Vagina (tissue), 2 donors: ENCODE measurements at regions of chr17 and their contacts with region 1.

Region 1: DNA sequence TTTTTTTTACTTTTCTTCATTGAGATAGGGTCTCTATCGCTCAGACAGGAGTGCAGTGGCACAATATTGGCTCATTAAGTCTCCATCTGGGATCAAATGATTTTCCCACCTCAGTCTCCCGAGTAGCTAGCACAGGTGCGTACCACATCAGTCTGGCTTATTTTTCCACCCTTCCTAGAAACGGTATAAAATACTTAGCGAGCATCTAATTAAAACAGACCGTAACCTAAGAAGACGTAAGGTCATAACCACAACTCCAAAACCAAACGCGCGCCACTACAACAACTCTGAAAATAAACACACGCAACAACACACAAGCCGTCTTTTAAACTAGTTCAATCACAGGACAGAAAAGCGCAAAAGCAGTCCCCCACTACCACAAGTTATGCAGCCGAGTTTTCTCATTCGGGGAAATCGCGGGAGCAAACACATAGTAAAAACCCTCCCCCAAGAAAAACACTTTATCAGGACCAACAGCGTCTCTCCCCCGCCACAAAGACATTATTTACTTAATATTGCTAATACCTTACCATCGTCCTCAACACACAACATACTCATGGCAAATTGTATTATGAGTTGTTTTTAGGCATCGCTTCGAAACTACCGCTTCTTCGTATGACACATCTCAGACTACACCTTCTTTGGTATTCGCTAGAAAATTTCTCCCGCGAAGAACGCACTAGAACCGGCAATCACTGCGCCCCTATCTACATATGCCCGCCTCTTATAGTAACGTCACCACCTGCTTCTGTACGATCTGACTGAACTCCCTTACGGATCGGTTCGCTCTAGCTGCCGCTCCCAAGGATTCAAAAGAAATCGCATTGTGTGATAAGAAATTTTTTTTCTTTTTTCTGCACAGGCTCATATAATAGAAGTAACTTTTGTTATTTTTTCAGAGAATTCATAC is 32.8 kb downstream of the TEX14 start:
- DNase-seq: peak in 1 of 2 donors; percentile 92
- H3K4me3 ChIP-seq: peak overlapping the region; percentile 29 to 44
- H3K27ac ChIP-seq: peak overlapping the region; percentile 59
- H3K4me1 ChIP-seq: peaks cover 5% of the 10 kb centered on the region
- H3K27me3 ChIP-seq: no peaks in the 10 kb centered on the region
- CTCF ChIP-seq: no peak
- POLR2A ChIP-seq: peak; percentile 92

Region 2: DNA sequence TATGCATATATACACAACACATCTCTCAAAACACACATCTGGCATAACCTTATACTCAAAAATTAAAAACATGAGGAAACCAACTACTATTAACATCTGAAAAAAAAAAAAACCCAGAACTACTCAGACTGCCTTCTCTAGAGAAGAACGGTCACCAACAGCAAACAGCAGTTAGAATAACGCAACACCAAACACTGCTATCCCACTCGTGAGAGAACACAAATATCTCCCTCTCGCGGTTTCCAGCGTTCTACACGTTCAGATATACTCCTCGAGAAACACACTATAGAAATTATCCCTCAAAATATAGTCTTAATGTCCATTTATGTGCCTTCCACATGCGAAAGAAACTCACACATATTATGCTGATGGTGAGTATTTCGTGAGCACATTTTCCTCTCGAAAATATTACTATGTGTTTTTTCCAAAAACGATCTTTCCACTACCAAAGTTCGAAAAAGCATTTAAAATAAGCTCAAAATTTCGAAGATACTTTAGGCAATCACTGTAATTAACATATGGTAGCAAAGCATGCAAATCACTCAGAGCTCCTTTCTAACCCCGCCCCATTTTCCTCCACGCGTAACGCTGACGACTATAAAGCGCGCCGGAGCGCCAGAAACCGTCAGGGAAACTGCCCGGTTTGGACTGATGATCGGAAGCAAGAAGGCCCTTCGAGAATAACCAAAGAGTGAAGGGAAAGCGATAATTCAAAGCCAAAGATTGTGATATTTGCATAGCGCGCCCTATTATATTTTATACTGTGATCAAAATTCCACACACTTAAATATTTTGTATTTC is 27.3 kb before region 1 on chr17:
- intact Hi-C with region 1: loop called (anchors 2 kb)
- DNase-seq: peak in 1 of 2 donors; percentile 95
- H3K4me3 ChIP-seq: peak overlapping the region; percentile 40 to 45
- H3K27ac ChIP-seq: peak overlapping the region; percentile 78
- H3K4me1 ChIP-seq: peaks cover 5% of the 10 kb centered on the region
- H3K27me3 ChIP-seq: no peaks in the 10 kb centered on the region
- CTCF ChIP-seq: no peak
- POLR2A ChIP-seq: peak in 1 of 2 donors; percentile 81